ENCODE measurements at regions of chr10 and their contacts with region 1.

Region 1: GRCh38 chr10:112961609-112962008 is 11.6 kb downstream of the TCF7L2 start:
- DNase-seq: no peak
- H3K4me3 ChIP-seq: no peak overlapping the region
- H3K27ac ChIP-seq: no peak overlapping the region
- H3K4me1 ChIP-seq: peaks cover 17 to 49% (median 23%) of the 10 kb centered on the region in 4 experiments
- H3K27me3 ChIP-seq: no peaks in the 10 kb centered on the region
- CTCF ChIP-seq: no peak
- EP300 ChIP-seq: no peak
- POLR2A ChIP-seq: no peak
- RAD21 ChIP-seq: no peak

Region 2: DNA sequence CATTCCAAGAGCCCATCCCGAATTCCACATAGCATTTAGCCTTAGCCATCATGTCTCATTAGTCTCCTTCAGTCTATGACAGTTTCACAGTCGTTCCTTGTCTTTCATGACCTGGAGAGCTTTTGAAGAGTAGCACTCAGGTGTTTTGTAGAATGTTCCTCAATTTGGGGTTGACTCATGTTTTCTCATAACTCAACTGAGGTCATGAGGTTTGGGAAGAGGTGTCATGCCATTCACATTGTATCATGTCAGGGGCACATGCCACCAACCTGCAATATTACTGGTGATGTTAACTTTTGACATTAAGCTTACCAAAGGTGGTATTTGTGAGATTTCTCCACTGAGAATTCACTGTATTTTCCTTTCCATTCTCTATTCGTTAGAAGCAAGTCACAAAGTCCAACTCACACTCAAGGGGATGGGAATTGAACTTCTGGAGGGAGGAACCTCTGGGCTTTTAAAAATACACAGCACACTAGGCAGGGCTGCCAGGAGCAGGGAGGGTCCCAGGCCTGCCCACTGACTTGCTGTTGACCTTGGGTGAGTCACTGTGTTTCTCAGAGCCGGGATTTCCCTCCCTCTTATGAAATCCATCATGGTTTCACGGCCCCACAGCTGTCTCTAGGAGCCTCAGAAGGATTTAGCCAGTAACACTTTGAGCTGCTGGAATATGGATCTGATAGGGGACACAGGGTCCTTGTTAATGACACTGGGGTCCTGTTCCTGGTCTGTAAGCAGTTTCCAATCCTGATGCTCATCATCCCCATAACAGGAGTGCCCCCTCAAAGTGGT is 85.9 kb before region 1 on chr10:
- CTCF ChIA-PET with region 1: no interaction called
- POLR2A ChIA-PET with region 1: no interaction called
- DNase-seq: no peak
- H3K4me3 ChIP-seq: no peak overlapping the region
- H3K27ac ChIP-seq: no peak overlapping the region
- H3K4me1 ChIP-seq: no peaks in the 10 kb centered on the region
- H3K27me3 ChIP-seq: no peaks in the 10 kb centered on the region
- CTCF ChIP-seq: no peak
- EP300 ChIP-seq: no peak
- POLR2A ChIP-seq: no peak
- RAD21 ChIP-seq: no peak

Region 3: GRCh38 chr10:112886463-112886862 is 75.1 kb before region 1 on chr10:
- CTCF ChIA-PET with region 1: no interaction called
- POLR2A ChIA-PET with region 1: no interaction called
- DNase-seq: no peak
- H3K4me3 ChIP-seq: peak overlapping the region in 2 of 4 experiments; percentile 19 to 39; a peak in 4 of 8 replicates
- H3K27ac ChIP-seq: no peak overlapping the region
- H3K4me1 ChIP-seq: peaks cover 5 to 20% (median 14%) of the 10 kb centered on the region in 4 experiments
- H3K27me3 ChIP-seq: no peaks in the 10 kb centered on the region; a peak in 2 of 7 replicates
- CTCF ChIP-seq: no peak
- EP300 ChIP-seq: no peak
- POLR2A ChIP-seq: no peak
- RAD21 ChIP-seq: no peak

Region 4: GRCh38 chr10:112973805-112974204 is 12.2 kb after region 1 on chr10:
- CTCF ChIA-PET with region 1: interaction called, 7 read pairs
- POLR2A ChIA-PET with region 1: interaction called, 13 read pairs
- DNase-seq: no peak
- H3K4me3 ChIP-seq: no peak overlapping the region
- H3K27ac ChIP-seq: no peak overlapping the region
- H3K4me1 ChIP-seq: peaks cover 0 to 8% (median 4%) of the 10 kb centered on the region in 4 experiments; a peak in 4 of 7 replicates
- H3K27me3 ChIP-seq: no peaks in the 10 kb centered on the region
- CTCF ChIP-seq: peak in 1 of 3 experiments; percentile 8; a peak in 1 of 4 replicates
- EP300 ChIP-seq: no peak
- POLR2A ChIP-seq: no peak
- RAD21 ChIP-seq: peak in 1 of 2 experiments; percentile 19; a peak in 1 of 4 replicates

Measured in H1 (cell line).